CD4-positive, alpha-beta memory T cell (primary cell): ENCODE measurements at regions of chr2 and their contacts with region 1.

Region 1: GRCh38 chr2:74472086-74472944 is at the start of gene MRPL53:
- DNase-seq: peak; percentile 95 to 96 (median 95)
- H3K4me3 ChIP-seq: peak within 1 kb of the TSS; percentile 67 to 84
- H3K4me3 Mint-ChIP-seq: peak within 1 kb of the TSS; percentile 96 to 99 (median 98)
- H3K27ac ChIP-seq: peak within 1 kb of the TSS; percentile 88
- H3K27ac Mint-ChIP-seq: peak within 1 kb of the TSS; percentile 97 to 100 (median 99)
- H3K4me1 ChIP-seq: peaks cover 20% of the 10 kb centered on the region
- H3K4me1 Mint-ChIP-seq: peaks cover 9 to 40% (median 21%) of the 10 kb centered on the region in 4 donors
- H3K27me3 ChIP-seq: no peaks in the 10 kb centered on the region
- H3K27me3 Mint-ChIP-seq: no peaks in the 10 kb centered on the region
- total RNA-seq, gene MRPL53: 72.8 to 82.3 TPM

Region 2: GRCh38 chr2:74317701-74318301 is 154.5 kb before region 1 on chr2:
- CTCF ChIA-PET with region 1: no interaction called
- POLR2A ChIA-PET with region 1: no interaction called
- intact Hi-C with region 1: no loop called
- DNase-seq: no peak
- H3K4me3 ChIP-seq: no peak overlapping the region
- H3K4me3 Mint-ChIP-seq: no peak overlapping the region
- H3K27ac ChIP-seq: no peak overlapping the region
- H3K27ac Mint-ChIP-seq: no peak overlapping the region
- H3K4me1 ChIP-seq: no peaks in the 10 kb centered on the region
- H3K4me1 Mint-ChIP-seq: no peaks in the 10 kb centered on the region
- H3K27me3 ChIP-seq: no peaks in the 10 kb centered on the region
- H3K27me3 Mint-ChIP-seq: no peaks in the 10 kb centered on the region

Region 3: DNA sequence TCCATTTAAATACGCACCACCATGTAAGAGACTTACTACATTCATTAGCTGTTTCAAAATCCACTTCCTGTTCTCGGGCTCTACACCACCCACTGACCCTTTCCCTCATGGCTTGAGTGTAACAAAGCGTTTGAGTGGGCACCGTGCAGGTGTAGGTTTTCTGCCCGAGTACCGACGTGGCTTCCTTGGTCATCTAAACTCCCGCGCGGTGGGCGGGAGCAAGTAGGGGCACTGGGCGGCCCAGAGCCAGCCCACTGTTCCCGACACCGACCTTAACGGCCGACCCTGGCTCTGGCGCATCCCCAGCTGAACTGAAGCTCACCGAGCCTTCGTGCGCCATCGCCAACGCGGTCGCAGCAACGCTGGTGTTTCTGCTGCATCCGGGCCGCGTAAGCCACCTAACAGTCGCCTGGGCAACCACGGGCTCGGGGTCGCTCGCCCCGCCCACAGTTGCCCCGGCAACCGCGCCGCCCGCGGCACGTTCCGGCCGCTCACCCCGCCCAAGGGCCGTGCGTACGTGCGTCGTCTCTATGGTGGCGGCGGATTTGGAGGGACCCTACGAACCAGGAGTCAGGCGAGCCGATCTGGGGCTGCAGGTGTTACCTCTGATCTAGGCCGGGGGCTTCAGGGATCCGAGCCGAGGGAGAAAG is 51.0 kb before region 1 on chr2 and contains the starts of genes C2orf81 and WDR54:
- CTCF ChIA-PET with region 1: no interaction called
- POLR2A ChIA-PET with region 1: interaction called, 10 read pairs
- intact Hi-C with region 1: no loop called
- DNase-seq: peak; percentile 91 to 96 (median 95)
- H3K4me3 ChIP-seq: peak within 1 kb of the TSS; percentile 76 to 88
- H3K4me3 Mint-ChIP-seq: peak within 1 kb of the TSS; percentile 96 to 100 (median 98)
- H3K27ac ChIP-seq: peak within 1 kb of the TSS; percentile 93
- H3K27ac Mint-ChIP-seq: peak within 1 kb of the TSS; percentile 88 to 100 (median 99)
- H3K4me1 ChIP-seq: peaks cover 11% of the 10 kb centered on the region
- H3K4me1 Mint-ChIP-seq: peaks cover 12 to 30% (median 21%) of the 10 kb centered on the region in 4 donors
- H3K27me3 ChIP-seq: no peaks in the 10 kb centered on the region
- H3K27me3 Mint-ChIP-seq: no peaks in the 10 kb centered on the region
- total RNA-seq, gene C2orf81: 5.3 to 7.5 TPM
- total RNA-seq, gene WDR54: 36.3 to 41.0 TPM

Region 4: DNA sequence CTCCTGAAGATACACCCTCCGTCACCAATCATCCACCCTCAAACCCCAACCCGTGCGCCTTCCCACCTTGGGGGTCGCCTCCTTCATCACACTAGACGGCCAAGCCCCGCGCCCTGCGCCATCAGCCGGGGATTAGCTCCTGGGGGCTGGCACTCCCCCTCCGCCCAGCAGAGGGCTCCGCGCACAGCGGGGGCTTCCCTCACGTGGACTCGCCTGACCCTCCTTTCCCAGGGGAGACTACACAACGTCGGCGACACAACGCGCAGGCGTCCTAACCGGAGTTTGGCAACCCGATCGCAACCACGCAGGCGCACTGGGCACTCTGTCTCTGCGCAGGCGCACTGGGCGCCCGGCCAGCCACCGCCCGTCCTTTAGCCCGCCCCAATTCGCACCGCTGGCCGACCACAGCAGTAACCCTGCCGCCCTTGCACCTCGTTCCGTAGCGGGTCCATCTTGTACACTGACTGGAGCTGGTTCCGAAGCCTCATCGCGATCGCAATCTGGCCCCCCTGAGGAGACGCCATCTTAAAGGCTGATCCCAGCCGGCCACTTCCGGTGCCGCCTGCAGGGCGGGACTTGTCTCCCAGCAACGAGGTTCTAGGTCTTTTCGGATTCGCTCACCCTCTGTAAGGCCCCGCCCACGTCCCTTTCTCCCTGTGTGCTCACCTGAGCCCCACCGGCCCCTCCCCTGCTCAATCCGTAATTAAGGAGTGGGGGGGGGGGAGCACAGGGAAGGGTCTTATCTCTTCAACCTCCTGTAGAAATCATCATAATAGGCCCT is 35.0 kb after region 1 on chr2 and contains the start of gene PCGF1:
- CTCF ChIA-PET with region 1: interaction called, 3 read pairs
- POLR2A ChIA-PET with region 1: interaction called, 28 read pairs
- intact Hi-C with region 1: no loop called
- DNase-seq: peak; percentile 98 to 99 (median 98)
- H3K4me3 ChIP-seq: peak within 1 kb of the TSS; percentile 83 to 97
- H3K4me3 Mint-ChIP-seq: peak within 1 kb of the TSS; percentile 98 to 100 (median 100)
- H3K27ac ChIP-seq: peak within 1 kb of the TSS; percentile 98
- H3K27ac Mint-ChIP-seq: peak within 1 kb of the TSS; percentile 97 to 100 (median 100)
- H3K4me1 ChIP-seq: peaks cover 40% of the 10 kb centered on the region
- H3K4me1 Mint-ChIP-seq: peaks cover 18 to 64% (median 46%) of the 10 kb centered on the region in 4 donors
- H3K27me3 ChIP-seq: peaks cover 19% of the 10 kb centered on the region
- H3K27me3 Mint-ChIP-seq: peaks cover 16 to 45% of the 10 kb centered on the region in 2 donors
- total RNA-seq, gene PCGF1: 31.1 to 42.2 TPM

Region 5: GRCh38 chr2:74573747-74574562 is 101.6 kb after region 1 on chr2:
- CTCF ChIA-PET with region 1: no interaction called
- POLR2A ChIA-PET with region 1: no interaction called
- intact Hi-C with region 1: no loop called
- DNase-seq: peak in 4 of 5 donors; percentile 25 to 37 (median 30)
- H3K4me3 ChIP-seq: peak overlapping the region in 1 of 2 donors; percentile 42
- H3K4me3 Mint-ChIP-seq: peak overlapping the region; percentile 12 to 87 (median 78)
- H3K27ac ChIP-seq: no peak overlapping the region
- H3K27ac Mint-ChIP-seq: peak overlapping the region; percentile 58 to 83 (median 80)
- H3K4me1 ChIP-seq: peaks cover 15% of the 10 kb centered on the region
- H3K4me1 Mint-ChIP-seq: peaks cover 13 to 17% (median 14%) of the 10 kb centered on the region in 4 donors
- H3K27me3 ChIP-seq: no peaks in the 10 kb centered on the region
- H3K27me3 Mint-ChIP-seq: peaks cover 0 to 10% of the 10 kb centered on the region in 2 donors

Region 6: DNA sequence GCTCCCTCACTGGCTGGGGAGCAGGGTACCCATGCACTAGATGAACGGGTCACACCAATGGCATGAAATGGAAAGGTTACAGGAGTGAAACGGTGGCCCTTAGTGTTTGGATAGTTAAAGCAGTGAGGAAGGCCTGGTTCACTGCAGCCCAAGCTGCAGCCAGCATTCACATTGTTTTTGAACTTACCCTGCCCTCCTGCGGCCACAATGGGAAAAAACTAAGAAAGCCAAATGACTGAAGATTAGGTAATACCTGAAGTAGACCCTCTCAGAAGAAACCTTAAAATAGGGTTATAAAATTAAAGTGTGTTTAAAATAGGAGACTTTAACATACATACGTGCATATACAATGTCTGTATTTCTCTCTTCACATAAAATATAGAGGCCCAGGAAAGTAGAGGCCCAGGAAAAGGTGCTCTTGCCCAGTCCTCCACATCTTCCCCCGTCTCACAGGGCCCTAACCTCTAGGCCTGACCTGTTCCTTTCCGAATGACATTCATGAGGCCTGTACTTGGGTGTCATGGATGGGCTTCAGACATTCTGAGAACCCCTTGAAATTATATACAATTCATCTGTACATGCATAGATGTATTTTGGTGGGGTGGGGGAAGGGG is 115.5 kb after region 1 on chr2:
- CTCF ChIA-PET with region 1: interaction called, 15 read pairs
- POLR2A ChIA-PET with region 1: interaction called, 4 read pairs
- intact Hi-C with region 1: no loop called
- DNase-seq: peak; percentile 58 to 68 (median 67)
- H3K4me3 ChIP-seq: no peak overlapping the region
- H3K4me3 Mint-ChIP-seq: no peak overlapping the region
- H3K27ac ChIP-seq: no peak overlapping the region
- H3K27ac Mint-ChIP-seq: no peak overlapping the region
- H3K4me1 ChIP-seq: peaks cover 8% of the 10 kb centered on the region
- H3K4me1 Mint-ChIP-seq: peaks cover 7 to 10% (median 9%) of the 10 kb centered on the region in 4 donors
- H3K27me3 ChIP-seq: peaks cover 13% of the 10 kb centered on the region
- H3K27me3 Mint-ChIP-seq: peaks cover 1 to 8% of the 10 kb centered on the region in 2 donors

Region 7: DNA sequence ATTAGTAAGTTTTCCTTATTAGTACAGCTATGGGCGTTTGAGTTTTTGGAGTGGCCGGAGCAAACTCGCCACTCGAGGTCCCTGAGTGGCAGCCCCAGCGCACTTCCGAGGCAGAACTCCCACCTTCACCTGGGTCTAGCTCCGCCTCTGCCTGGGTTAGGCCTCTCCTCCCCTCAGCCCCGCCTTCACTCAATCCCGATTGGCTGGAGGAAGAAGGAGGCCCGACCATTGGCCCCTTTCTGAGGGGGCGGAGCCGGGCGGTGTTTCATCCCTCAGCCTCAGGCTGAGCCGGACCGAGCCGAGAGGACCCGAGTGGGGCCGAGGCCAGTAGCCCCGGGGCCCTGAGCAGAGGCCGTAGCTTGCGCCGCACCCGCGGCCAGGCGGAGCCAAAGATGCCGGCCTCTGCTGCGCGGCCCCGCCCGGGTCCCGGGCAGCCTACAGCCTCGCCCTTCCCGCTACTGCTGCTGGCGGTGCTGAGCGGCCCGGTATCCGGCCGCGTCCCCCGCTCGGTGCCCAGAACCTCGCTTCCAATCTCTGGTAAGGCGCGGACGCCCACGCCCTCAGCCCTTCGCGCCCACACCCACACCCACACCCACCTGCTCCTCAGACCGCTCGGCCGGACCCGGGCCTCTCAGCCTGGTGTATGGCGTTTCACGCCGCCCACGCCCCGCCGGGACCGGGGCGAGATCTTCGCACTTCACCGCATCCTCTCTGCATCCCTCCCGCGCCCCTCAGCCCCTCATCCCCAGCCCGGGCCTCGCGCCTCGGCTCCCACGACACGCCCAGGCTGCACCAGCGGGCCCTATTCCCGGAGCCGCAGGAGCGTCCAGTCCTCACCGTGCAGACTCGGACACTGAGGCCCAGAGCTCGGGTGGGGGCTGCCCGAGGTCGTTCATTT is 181.9 kb after region 1 on chr2 and contains the start of gene SEMA4F:
- CTCF ChIA-PET with region 1: no interaction called
- POLR2A ChIA-PET with region 1: no interaction called
- intact Hi-C with region 1: no loop called
- DNase-seq: peak; percentile 91 to 96 (median 94)
- H3K4me3 ChIP-seq: peak within 1 kb of the TSS; percentile 31 to 89
- H3K4me3 Mint-ChIP-seq: peak within 1 kb of the TSS; percentile 88 to 96 (median 92)
- H3K27ac ChIP-seq: peak within 1 kb of the TSS; percentile 58
- H3K27ac Mint-ChIP-seq: peak within 1 kb of the TSS; percentile 62 to 94 (median 90)
- H3K4me1 ChIP-seq: peaks cover 16% of the 10 kb centered on the region
- H3K4me1 Mint-ChIP-seq: peaks cover 13 to 29% (median 22%) of the 10 kb centered on the region in 4 donors
- H3K27me3 ChIP-seq: no peaks in the 10 kb centered on the region
- H3K27me3 Mint-ChIP-seq: peaks cover 2 to 4% of the 10 kb centered on the region in 2 donors
- total RNA-seq, gene SEMA4F: 19.5 to 21.6 TPM